PC-9 (cell line): ENCODE measurements at regions of chr14 and their contacts with region 1.

Region 1: DNA sequence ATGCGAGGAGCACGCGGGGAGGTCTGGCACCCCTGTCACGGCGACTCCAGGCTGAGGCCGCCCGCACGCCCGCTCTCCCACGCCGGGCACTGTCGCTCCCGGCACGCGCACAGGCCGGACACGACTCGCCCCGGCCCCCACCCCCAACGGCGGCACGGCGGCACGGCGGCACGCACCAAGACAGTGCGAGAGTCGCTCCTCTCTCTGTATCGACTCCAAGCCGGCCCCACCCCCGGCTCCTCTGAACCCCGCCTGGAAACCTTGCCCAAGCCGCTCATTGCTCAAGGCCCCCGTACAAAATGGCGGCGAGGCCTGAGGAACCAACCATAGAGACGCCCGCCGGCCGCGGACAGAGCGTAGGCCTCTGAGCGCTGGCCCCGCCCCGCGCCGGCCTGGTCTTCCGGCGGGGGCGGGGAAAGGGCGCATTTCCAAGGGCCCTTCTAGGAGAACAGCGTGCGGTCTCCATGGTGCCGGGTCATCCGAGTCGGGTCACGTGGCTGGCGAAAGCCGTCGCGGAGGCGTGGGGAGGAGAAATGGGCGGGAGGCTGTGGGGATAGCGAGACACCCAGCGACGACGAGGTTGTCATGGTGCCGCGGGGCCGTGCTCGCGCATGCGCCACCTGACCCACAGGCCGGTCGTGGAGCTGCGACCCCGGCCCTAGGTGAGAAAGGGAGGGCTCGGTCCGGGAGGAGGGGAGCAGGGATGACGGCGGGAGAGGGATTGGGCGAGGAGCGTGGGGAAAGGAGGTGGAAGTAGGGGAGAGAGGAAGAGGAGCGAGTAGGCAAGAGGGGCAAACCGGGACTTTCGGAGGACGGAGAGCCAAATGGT is at the start of gene CIPC:
- DNase-seq: peak; percentile 99 to 100
- H3K4me3 ChIP-seq: peak within 1 kb of the TSS; percentile 83
- H3K27ac ChIP-seq: peak within 1 kb of the TSS; percentile 90
- H3K4me1 ChIP-seq: peaks cover 25% of the 10 kb centered on the region
- H3K27me3 ChIP-seq: no peaks in the 10 kb centered on the region
- CTCF ChIP-seq: no peak; the same call in 1 of the 2 replicates
- total RNA-seq, gene CIPC: 54.7 and 66.3 TPM in 2 replicates

Region 2: DNA sequence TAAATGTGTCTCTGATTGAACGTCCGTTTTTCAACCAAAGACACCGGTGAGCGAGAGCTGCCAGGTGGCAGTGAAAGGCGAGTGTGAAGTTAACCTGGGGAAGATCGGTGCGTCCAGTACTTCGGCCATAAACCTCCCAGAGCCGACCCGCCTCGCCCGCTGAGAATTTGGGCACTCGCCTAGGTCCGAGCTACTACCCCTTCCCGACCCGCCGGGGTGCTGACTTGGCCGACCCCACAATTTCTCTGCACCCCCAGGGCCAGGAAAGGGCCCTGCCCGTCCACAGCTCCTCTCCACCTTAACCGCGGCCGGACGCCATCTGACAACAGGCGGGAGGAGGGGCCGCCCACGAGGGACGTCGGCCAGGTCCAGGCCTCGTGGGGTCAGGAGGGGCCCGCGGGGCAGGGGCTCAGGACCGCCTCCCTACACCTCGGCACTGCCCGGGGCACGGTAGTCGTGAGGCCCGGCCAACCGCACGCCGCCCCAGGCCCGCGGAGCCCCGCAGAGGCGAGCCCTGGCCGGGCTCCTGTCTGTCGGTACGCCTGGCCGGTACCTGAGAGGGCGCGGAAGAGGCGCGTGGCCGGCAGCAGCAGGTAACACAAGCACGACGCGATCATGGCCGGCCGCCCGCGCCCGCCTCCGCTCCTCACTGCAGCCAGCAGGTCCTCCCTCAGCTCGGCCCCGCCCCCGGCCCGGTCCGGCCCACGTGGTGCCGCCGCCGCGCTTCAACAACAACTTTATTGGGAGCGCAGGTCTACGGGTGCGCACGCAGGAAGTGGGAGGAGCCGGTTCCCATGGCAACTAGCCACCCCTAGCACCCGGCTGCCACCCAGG is 285.5 kb before region 1 on chr14 and contains the start of gene ANGEL1:
- CTCF ChIA-PET with region 1: no interaction called
- POLR2A ChIA-PET with region 1: no interaction called
- intact Hi-C with region 1: loop called (anchors 2 kb)
- DNase-seq: peak; percentile 85 to 100
- H3K4me3 ChIP-seq: peak within 1 kb of the TSS; percentile 74
- H3K27ac ChIP-seq: no peak within 1 kb of the TSS
- H3K4me1 ChIP-seq: peaks cover 14% of the 10 kb centered on the region
- H3K27me3 ChIP-seq: peaks cover 17% of the 10 kb centered on the region
- CTCF ChIP-seq: no peak
- total RNA-seq, gene ANGEL1: 31.7 and 44.0 TPM in 2 replicates

Region 3: GRCh38 chr14:76947078-76947837 is 150.7 kb before region 1 on chr14:
- CTCF ChIA-PET with region 1: no interaction called
- POLR2A ChIA-PET with region 1: interaction called, 18 read pairs
- intact Hi-C with region 1: no loop called
- DNase-seq: peak; percentile 95 to 100
- H3K4me3 ChIP-seq: peak overlapping the region; percentile 15; the same call in 1 of the 2 replicates
- H3K27ac ChIP-seq: peak overlapping the region; percentile 93
- H3K4me1 ChIP-seq: peaks cover 81% of the 10 kb centered on the region
- H3K27me3 ChIP-seq: no peaks in the 10 kb centered on the region
- CTCF ChIP-seq: peak; percentile 59; the same call in 1 of the 2 replicates

Region 4: DNA sequence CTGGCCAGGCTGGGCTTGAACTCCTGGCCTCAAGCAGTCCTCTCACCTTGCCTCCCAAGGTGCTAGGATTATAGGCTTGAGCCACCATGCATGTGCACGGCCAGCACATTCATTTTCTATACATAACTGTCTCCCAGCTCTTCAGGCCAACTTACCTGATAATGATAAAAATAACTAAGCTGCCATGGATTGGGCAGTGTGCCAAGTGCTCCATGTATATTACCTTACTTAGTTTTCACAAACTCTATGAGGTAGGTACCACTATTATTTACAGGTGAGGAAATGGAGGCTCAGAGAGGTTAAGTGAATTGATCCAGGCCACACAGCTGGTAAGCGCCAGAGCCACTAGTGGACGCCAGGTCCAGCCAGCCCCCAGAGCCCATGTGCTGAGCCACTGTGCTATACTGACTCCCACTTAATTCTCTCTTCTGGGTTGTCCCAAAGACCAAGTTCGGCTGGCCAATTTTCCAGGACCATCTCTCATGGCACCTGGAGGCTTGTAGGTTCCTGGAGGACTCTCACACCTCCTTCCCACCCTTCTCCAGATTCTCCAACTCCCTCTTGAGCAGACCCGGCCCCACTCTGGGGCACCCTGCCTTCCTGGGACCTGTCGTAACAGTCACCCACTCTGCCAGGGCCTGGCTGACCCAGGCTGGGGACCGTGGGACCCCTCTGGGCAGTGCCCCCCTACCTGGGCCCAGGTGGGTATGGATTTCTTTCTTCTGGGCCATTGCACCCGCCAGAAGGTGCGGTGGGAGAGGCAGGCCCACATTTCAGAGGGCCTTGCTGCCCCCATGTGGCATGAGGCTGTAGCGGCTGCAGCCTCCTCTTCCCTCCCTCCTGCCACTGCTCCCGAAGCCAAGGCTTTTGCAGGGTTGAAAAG is 30.0 kb before region 1 on chr14:
- CTCF ChIA-PET with region 1: interaction called, 10 read pairs
- POLR2A ChIA-PET with region 1: interaction called, 3 read pairs
- intact Hi-C with region 1: loop called (anchors 1 kb)
- DNase-seq: peak; percentile 74 to 93
- H3K4me3 ChIP-seq: no peak overlapping the region
- H3K27ac ChIP-seq: no peak overlapping the region
- H3K4me1 ChIP-seq: peaks cover 54% of the 10 kb centered on the region
- H3K27me3 ChIP-seq: no peaks in the 10 kb centered on the region
- CTCF ChIP-seq: peak; percentile 100

Region 5: GRCh38 chr14:77124345-77125280 is 26.7 kb after region 1 on chr14:
- CTCF ChIA-PET with region 1: interaction called, 38 read pairs
- POLR2A ChIA-PET with region 1: interaction called, 23 read pairs
- intact Hi-C with region 1: loop called (anchors 1 kb)
- DNase-seq: peak in 1 of 2 experiments; percentile 81
- H3K4me3 ChIP-seq: peak overlapping the region; percentile 31; the same call in 1 of the 2 replicates
- H3K27ac ChIP-seq: no peak overlapping the region
- H3K4me1 ChIP-seq: peaks cover 26% of the 10 kb centered on the region
- H3K27me3 ChIP-seq: peaks cover 51% of the 10 kb centered on the region
- CTCF ChIP-seq: peak; percentile 28; the same call in 1 of the 2 replicates

Region 6: DNA sequence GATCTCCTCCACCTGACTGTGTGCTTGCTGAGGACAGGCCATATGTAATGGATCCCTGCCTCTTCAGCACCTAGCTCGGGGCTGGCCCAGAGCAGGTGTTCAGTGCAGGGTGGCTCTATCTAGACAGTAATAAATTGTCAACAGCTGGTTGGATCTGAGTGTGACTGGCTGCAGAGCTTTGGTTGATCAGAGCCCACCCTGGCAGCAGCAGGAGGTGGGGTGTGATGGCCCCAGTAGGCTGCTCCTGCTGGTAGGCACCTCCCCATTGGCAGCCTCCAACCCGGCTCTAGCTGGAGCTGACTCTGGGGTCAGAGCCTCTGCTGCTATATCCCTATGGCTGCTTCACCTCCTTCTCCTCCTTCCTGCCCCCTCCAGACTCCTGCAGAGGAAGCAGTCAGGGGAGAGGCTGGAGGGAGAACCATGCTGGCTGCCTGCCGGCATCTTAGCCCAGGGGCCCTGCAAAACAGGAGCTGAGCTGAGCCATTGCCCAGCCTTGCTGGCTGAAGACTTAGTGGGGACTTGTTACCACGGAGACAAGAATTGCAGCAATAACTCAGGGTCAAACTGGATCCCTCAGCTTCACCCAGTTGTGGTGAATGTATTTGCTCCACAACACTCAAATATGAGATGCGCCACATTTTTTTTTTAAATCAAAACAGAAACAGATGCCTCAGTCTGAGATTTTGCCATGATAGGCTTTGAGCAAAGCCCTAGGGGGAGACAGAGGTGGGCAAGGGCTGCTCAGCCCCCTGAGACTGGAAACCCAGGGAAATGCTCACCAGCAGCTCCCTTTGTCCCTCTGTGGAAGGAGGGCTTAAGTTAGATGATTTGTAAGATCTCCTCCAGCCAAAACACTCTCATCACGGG is 105.9 kb after region 1 on chr14:
- CTCF ChIA-PET with region 1: no interaction called
- POLR2A ChIA-PET with region 1: no interaction called
- intact Hi-C with region 1: no loop called
- DNase-seq: no peak
- H3K4me3 ChIP-seq: no peak overlapping the region
- H3K27ac ChIP-seq: no peak overlapping the region
- H3K4me1 ChIP-seq: no peaks in the 10 kb centered on the region
- H3K27me3 ChIP-seq: peaks cover 75% of the 10 kb centered on the region
- CTCF ChIP-seq: no peak

Region 7: DNA sequence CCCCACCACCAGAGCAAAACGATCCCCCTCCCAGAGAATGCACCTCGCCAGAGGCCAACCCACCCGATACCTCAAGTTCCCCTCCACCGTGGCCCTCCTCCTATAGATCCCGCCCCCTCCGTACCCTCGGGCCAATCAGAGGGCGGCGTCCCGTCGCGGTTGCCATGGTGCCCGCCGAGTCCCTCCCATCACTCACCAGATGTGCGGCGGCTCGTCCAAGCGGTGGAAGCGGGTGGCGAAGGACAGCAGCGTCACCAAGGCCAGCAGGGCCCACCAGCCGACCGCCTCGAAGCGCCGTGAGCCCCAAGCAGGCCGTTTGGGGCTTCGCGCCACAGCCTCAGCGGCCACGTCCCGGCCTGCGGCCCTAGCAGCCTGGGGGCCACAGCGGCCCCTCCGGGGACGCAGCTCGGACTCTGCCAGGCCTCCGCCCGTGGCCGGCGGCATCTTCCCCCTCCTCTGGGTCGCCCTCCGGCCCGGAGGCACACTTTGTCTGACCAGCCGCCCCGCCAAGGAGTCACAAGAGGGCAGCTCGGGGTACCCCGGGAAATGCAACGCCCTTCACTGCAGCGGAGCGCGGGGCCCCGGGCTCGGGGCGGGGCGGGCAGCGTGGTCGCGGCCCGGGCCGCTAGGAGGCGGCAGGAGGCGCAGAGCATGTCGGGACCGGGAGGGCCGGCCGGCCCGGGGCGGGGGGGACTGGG is 222.5 kb after region 1 on chr14 and contains the start of gene POMT2:
- CTCF ChIA-PET with region 1: interaction called, 6 read pairs
- POLR2A ChIA-PET with region 1: no interaction called
- intact Hi-C with region 1: loop called (anchors 1 kb)
- DNase-seq: peak; percentile 89 to 100
- H3K4me3 ChIP-seq: peak within 1 kb of the TSS; percentile 83
- H3K27ac ChIP-seq: peak within 1 kb of the TSS; percentile 72
- H3K4me1 ChIP-seq: peaks cover 18% of the 10 kb centered on the region
- H3K27me3 ChIP-seq: no peaks in the 10 kb centered on the region
- CTCF ChIP-seq: peak; percentile 76
- total RNA-seq, gene POMT2: 96.5 and 109 TPM in 2 replicates